A549 (cell line): ENCODE measurements at regions of chr11 and their contacts with region 1.

Region 1: DNA sequence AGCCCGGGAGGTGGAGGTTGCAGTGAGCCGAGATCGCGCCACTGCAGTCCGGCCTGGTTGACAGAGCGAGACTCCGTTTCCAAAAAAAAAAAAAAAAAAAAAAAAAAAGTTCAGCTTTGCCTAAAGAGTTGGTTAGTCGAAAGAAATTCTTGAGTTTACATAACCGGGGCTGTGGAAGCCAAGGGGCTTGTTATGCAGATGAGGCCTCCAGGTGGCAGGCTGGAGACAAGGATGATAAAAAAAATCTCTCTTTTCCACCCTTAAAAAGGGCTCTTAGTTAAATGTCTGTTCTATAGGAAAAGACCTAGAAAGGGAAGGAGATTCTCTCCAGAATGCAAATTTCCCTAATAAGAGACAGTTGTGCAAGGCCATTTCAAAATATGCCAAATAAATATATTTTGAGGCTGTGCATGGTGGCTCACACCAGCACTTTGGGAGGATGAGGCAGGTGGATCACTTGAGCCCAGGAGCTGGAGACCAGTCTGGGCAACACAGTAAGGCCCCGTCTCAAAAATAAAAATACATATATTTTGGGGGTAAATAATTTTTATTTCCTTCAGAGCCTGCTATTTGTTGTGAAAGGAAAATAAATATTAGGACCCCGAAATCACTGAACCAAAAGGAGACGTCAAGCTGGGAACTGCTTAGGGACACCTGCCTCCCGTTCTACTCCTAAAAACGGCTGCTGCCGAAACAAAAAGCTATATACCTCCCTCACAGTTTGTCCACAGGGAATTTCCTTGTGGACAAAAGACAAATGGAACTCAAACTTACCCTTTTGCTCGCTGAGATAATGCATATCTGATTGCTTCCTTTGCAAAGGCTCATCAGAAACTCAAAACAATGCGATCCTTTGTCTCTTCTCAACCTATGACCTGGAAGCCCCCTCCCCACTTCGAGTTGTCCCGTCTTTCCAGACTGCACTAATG is 2.4 kb upstream of the IFITM2 start:
- DNase-seq: peak; percentile 74 to 84
- ATAC-seq: peak; percentile 53 to 62; a peak in 4 of 6 replicates
- H3K4me3 ChIP-seq: no peak overlapping the region
- H3K27ac ChIP-seq: peak overlapping the region in 1 of 2 experiments; percentile 69; a peak in 3 of 6 replicates
- H3K4me1 ChIP-seq: peaks cover 22% of the 10 kb centered on the region; the same call in 2 of the 3 replicates
- CTCF ChIP-seq: peak; percentile 68
- EP300 ChIP-seq: no peak
- POLR2A ChIP-seq: no peak
- RAD21 ChIP-seq: peak; percentile 69 to 70

Region 2: DNA sequence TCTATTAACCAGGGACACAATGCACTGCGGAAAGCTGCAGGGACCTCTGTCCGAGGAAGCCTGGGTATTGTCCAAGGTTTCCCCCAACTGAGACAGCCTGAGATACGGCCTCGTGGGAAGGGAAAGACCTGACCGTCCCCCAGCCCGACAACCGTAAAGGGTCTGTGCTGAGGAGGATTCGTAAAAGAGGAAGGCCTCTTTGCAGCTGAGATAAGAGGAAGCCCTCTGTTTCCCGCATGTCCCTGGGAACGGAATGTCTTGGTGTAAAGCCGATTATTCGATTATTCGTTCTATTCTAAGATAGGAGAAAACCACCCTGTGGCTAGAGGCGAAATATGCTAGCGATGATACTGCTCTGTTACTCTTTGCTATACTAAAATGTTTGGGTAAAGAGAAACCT is 103.2 kb before region 1 on chr11:
- CTCF ChIA-PET with region 1: no interaction called
- POLR2A ChIA-PET with region 1: no interaction called
- DNase-seq: no peak
- ATAC-seq: no peak
- H3K4me3 ChIP-seq: no peak overlapping the region
- H3K27ac ChIP-seq: no peak overlapping the region
- H3K4me1 ChIP-seq: peaks cover 10% of the 10 kb centered on the region; the same call in 1 of the 3 replicates
- CTCF ChIP-seq: no peak
- EP300 ChIP-seq: no peak
- POLR2A ChIP-seq: no peak
- RAD21 ChIP-seq: no peak

Region 3: DNA sequence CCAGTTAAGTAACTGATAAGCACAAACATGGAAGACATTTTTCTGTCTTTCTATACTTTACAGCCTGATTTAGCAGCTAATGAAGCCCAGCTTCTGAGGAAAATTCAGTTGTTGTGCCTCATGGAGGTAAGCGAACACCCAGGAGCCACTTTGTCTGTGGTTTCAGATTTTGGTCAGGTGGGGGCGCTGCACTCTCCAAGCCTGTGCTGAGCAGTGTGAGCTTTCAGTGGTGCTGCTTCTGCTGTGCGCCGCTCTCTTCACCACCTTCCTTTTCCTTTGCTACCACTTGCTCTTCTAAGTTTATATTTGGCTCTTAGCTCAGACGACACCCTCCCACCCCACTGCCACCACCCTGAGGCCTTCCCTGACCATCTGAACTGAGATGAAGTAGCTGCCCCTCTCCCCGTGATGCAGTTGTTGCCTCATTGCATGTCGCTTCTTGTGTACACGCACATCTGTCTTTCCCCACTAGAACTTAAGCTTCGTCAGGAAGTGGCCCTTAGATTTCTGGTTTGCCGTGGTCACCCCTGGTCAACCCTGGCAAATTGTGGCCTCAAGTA is 54.4 kb before region 1 on chr11:
- CTCF ChIA-PET with region 1: interaction called, 33 read pairs
- POLR2A ChIA-PET with region 1: no interaction called
- DNase-seq: peak; percentile 30 to 63
- ATAC-seq: peak; percentile 86 to 93
- H3K4me3 ChIP-seq: no peak overlapping the region
- H3K27ac ChIP-seq: no peak overlapping the region
- H3K4me1 ChIP-seq: no peaks in the 10 kb centered on the region
- CTCF ChIP-seq: peak; percentile 64
- EP300 ChIP-seq: no peak
- POLR2A ChIP-seq: no peak
- RAD21 ChIP-seq: peak; percentile 42 to 49; a peak in 4 of 5 replicates

Region 4: GRCh38 chr11:288328-289144 is 16.6 kb before region 1 on chr11 and contains the start of gene PGGHG:
- CTCF ChIA-PET with region 1: interaction called, 49 read pairs
- POLR2A ChIA-PET with region 1: no interaction called
- DNase-seq: peak in 1 of 2 experiments; percentile 86
- ATAC-seq: peak; percentile 74 to 75
- H3K4me3 ChIP-seq: peak within 1 kb of the TSS; percentile 94
- H3K27ac ChIP-seq: peak within 1 kb of the TSS; percentile 92 to 96
- H3K4me1 ChIP-seq: peaks cover 5% of the 10 kb centered on the region; the same call in 1 of the 3 replicates
- CTCF ChIP-seq: no peak
- EP300 ChIP-seq: no peak
- POLR2A ChIP-seq: no peak
- RAD21 ChIP-seq: no peak
- polyA plus RNA-seq, gene PGGHG: 7.2 and 7.9 TPM in 2 replicates

Region 5: DNA sequence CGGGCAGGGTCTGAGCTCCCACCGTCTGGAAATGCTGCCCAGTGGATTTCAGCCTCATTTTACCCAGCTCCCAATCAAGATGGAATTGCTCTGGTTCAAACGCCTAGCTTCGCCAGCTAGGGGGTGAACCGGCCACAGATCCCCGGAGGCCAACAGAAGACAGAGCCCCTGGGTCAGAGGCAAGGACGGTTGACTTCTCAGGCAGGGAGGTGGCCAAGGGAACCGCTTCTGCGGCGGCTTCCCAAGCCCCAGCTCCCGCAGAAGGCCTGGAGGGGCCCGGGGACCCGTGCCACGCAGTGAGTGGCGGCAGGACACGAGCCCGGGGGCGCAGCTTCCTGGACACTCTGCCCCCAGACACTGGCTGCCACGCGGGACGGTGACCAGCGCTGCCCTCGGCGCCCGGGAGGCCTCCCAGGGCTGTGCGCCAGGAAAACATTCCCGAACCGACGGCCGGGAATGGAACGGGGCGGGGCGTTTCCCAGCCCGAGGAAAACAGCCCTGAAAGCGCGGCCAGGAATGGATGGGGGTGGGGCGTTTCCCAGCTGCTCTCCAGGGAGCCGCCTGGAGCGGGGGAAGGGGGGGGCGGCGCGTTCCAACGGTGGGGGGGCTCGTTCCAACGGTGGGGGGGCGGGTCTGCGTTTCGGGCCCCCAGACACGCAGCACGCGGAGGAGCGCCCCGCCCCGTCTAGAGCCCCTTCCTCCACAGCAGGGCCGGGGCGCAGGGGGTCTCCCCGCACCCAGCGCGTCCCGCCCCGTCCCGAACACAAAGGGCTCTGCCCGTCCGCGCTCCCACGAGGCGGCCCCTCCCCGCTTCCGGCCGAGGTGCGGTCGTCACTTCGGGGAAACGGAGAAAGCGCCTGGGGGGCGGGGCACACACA is 50.6 kb after region 1 on chr11:
- CTCF ChIA-PET with region 1: interaction called, 75 read pairs
- POLR2A ChIA-PET with region 1: interaction called, 7 read pairs
- DNase-seq: peak; percentile 84 to 92
- ATAC-seq: peak; percentile 91 to 94
- H3K4me3 ChIP-seq: peak overlapping the region; percentile 47
- H3K27ac ChIP-seq: peak overlapping the region; percentile 98 to 99
- H3K4me1 ChIP-seq: peaks cover 21% of the 10 kb centered on the region
- CTCF ChIP-seq: no peak
- EP300 ChIP-seq: peak in 1 of 2 experiments; percentile 73; a peak in 2 of 5 replicates
- POLR2A ChIP-seq: peak; percentile 61
- RAD21 ChIP-seq: no peak

Region 6: GRCh38 chr11:469684-470560 is 164.7 kb after region 1 on chr11:
- CTCF ChIA-PET with region 1: no interaction called
- POLR2A ChIA-PET with region 1: interaction called, 18 read pairs
- DNase-seq: peak; percentile 58 to 67
- ATAC-seq: peak; percentile 88 to 90
- H3K4me3 ChIP-seq: 0 out of 3 replicates have a peak overlapping the region, but pooled peaks have one; percentile 21
- H3K27ac ChIP-seq: peak overlapping the region; percentile 75 to 81
- H3K4me1 ChIP-seq: peaks cover 19% of the 10 kb centered on the region
- CTCF ChIP-seq: no peak
- EP300 ChIP-seq: no peak
- POLR2A ChIP-seq: no peak
- RAD21 ChIP-seq: no peak